K562 (cell line): ENCODE measurements at regions of chr11 and their contacts with region 1.

Region 1: DNA sequence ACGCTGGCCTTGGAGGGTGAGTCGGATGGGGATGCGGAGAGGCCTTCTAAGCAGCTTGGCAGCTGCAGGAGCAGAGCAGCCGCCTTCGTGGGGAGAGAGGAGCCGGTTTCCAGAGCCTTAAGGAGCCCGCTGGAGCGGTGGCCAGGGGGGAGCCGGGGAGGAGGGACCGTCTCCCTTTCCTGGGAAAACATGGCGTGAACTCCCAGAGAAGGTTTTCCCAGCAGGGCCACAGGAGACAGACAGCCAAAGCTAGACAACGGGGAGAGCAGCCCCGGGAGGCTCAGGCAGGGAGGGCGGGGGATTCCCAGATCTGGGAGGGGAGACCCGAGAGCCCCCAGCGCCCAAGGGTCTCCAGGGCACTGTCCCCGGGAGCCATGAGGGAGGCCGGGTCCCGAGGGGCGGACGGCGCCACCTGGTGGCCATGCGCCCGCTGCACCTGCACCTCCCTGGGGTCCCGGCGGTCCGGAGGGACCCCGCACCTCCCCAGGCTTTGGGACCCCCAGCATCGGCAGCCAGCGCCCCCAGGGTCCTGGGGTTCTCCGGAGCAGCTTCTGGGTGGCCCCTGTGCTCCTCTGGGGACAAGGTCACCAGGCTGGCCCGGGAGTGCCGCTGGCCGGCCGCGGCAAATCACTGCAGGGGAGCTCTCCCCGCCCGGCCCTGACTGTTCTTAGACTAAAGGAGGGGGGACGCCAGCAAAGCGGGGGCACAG is 2.4 kb upstream of the SYT8 start:
- DNase-seq: peak; percentile 51 to 87 (median 84)
- ATAC-seq: peak; percentile 90
- H3K4me3 ChIP-seq: no peak overlapping the region
- H3K27ac ChIP-seq: no peak overlapping the region
- H3K4me1 ChIP-seq: peaks cover 0 to 40% of the 10 kb centered on the region in 2 experiments; a peak in 2 of 5 replicates
- H3K27me3 ChIP-seq: peaks cover 3 to 75% of the 10 kb centered on the region in 2 experiments; a peak in 4 of 5 replicates
- CTCF ChIP-seq: peak; percentile 79 to 86 (median 81)
- EP300 ChIP-seq: no peak
- POLR2A ChIP-seq: no peak
- RAD21 ChIP-seq: peak; percentile 87 to 91

Region 2: DNA sequence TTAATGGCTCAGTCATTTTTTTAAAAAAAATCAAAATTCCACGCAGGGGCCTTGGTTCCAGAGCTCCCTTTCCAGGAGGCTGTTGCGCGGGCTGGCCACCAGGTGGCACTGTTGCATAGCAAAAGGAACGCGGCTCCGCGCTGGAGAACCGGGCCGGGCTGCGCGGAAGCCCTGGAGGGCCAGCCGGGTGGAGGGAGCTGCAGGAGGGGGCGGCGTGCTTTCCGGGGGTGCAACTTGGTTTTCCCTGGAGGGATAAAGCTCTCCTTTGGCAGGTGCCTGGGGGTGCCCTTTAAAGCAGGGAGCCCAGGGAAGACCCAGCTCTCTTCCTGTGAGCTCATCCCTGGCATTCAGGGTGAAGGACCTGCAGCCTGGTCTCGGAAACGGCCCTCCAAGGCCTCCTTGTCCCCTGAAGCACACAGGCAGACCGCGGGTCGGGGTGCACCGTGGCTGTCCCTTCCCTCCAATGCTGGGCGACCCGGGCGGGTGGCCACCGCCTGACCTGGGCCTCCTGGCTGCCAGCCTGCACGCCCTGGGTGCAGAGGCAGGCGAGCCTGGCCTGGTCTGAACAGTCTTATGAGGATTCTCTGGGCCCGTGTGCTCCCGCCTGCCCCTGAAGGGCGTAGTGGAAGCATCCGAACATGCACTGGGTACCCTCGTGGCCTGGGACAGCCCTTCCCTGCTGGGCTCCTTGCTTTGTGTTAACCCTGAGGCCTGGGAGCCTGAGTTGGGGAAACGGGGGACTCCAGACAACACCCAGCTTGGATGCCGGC is 179.4 kb before region 1 on chr11:
- CTCF ChIA-PET with region 1: interaction called, 15 read pairs
- POLR2A ChIA-PET with region 1: interaction called, 5 read pairs
- in situ Hi-C with region 1: no loop called
- intact Hi-C with region 1: loop called (anchors 2 kb)
- DNase-seq: peak; percentile 72 to 91 (median 88)
- ATAC-seq: peak; percentile 96
- H3K4me3 ChIP-seq: no peak overlapping the region
- H3K27ac ChIP-seq: no peak overlapping the region
- H3K4me1 ChIP-seq: peaks cover 0 to 15% of the 10 kb centered on the region in 2 experiments; a peak in 2 of 5 replicates
- H3K27me3 ChIP-seq: peaks cover 34 to 89% of the 10 kb centered on the region in 2 experiments
- CTCF ChIP-seq: peak; percentile 85 to 91 (median 90)
- EP300 ChIP-seq: no peak
- POLR2A ChIP-seq: no peak
- RAD21 ChIP-seq: peak; percentile 84 to 91

Region 3: DNA sequence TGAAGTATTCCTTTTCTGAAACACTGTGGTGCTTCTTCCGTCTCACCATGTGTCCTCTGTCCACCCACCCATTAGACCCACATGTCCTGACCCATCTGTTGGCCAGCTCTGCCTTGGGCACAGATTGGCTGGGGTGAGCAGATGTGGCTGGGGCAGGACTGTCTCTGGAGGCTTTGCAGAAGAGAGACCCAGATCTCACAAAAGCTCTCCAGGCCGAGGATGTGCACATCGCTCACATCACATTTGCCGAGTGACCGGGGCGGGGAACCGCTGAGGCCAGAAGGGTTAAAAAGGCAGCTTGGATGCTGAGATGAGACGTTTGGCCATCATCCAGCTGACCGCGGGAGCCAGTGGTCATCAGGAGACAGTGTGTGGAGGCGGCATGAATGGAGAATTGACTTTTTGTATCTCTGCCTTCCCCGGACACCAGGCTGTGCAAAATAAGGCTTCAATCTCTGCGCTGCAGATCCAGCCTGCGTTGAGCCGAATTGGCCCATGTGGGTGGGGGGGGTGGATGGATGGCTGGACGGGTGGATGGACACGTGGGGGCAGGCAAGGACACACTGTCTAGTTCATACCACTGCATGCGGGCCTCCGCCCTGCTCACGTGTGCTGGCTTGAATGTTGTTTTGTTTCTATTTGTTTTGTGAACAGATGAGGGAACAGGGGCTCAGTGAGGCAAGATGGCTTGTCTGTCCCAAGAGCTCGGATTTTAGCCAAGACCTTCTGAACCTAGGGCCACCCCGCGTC is 88.1 kb before region 1 on chr11:
- CTCF ChIA-PET with region 1: interaction called, 10 read pairs
- POLR2A ChIA-PET with region 1: no interaction called
- in situ Hi-C with region 1: no loop called
- intact Hi-C with region 1: no loop called
- DNase-seq: no peak
- ATAC-seq: peak; percentile 70
- H3K4me3 ChIP-seq: no peak overlapping the region
- H3K27ac ChIP-seq: no peak overlapping the region
- H3K4me1 ChIP-seq: peaks cover 0 to 5% of the 10 kb centered on the region in 2 experiments; a peak in 1 of 5 replicates
- H3K27me3 ChIP-seq: peaks cover 4 to 15% of the 10 kb centered on the region in 2 experiments; a peak in 3 of 5 replicates
- CTCF ChIP-seq: peak in 1 of 3 experiments; percentile 31; a peak in 2 of 6 replicates
- EP300 ChIP-seq: no peak
- POLR2A ChIP-seq: no peak
- RAD21 ChIP-seq: 0 out of 4 replicates have a peak, but pooled peaks of 1 of the 2 experiments have one; percentile 21